CD8-positive, alpha-beta memory T cell (primary cell): ENCODE measurements at regions of chr12 and their contacts with region 1.

Region 1: DNA sequence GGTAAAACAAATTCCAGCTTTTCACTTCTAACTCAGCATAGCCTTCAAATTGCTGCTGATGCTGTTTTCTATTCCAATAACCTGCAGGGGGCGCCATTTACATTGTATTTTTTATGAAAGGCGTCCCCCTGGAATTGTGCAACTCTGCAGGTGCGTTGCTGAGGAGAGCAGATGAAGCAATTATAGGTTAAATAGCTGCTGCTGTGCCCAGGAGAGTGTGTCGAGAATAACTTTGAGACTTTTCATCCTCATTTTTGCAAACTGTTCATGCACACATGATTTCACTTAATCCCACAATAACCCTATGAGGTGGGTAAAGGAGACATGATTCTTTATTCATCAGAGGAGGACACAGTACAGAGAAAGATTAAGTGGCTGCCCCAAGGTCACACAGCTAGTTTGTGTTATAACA is 75.7 kb downstream of the MYRFL start:
- DNase-seq: peak; percentile 31 to 64 (median 54)
- H3K4me3 ChIP-seq: no peak overlapping the region
- H3K4me3 Mint-ChIP-seq: no peak overlapping the region
- H3K27ac ChIP-seq: no peak overlapping the region
- H3K27ac Mint-ChIP-seq: no peak overlapping the region
- H3K4me1 ChIP-seq: no peaks in the 10 kb centered on the region
- H3K4me1 Mint-ChIP-seq: no peaks in the 10 kb centered on the region
- H3K27me3 ChIP-seq: no peaks in the 10 kb centered on the region
- H3K27me3 Mint-ChIP-seq: peaks cover 4 to 11% of the 10 kb centered on the region in 2 donors

Region 2: DNA sequence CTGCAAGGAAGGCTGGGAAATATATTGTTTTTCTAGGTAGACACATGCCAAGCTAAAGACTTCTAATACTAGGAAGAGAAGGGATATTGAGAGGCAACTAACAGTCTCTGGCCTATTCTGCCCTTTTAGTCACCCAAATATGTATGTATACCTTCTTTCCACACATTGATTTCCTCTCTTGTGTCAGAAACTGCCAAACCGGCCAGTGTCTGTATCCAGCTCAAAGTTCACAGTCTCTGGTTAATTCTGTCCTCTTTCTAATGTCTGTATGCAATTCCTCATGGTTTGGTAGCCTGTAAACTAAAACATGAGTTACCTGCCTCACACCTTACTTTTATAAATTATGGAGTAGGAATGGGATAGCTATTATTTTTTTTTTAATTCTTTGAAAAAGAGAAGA is 686.6 kb before region 1 on chr12:
- CTCF ChIA-PET with region 1: no interaction called
- POLR2A ChIA-PET with region 1: no interaction called
- DNase-seq: no peak
- H3K4me3 ChIP-seq: no peak overlapping the region
- H3K4me3 Mint-ChIP-seq: no peak overlapping the region
- H3K27ac ChIP-seq: no peak overlapping the region
- H3K27ac Mint-ChIP-seq: no peak overlapping the region
- H3K4me1 ChIP-seq: no peaks in the 10 kb centered on the region
- H3K4me1 Mint-ChIP-seq: no peaks in the 10 kb centered on the region
- H3K27me3 ChIP-seq: no peaks in the 10 kb centered on the region
- H3K27me3 Mint-ChIP-seq: no peaks in the 10 kb centered on the region

Region 3: DNA sequence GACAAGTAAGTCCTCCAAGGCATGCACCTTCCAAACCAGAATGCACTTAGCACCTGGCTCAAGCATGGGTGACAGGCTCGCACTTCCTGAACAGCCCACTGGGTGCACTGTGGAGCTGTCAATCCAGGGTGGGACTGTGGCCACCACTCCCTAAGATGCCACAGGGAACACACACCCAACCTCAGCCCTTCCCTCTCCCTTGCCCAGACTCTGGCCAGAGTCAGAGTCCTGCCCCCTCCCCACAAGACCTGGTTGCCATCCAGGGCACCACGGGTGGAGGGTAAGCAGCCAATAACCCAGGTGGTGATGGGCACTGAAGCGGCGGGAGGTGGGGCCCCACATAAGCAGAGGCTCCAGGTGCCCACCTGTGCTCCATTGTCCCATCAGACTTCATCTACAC is 84.9 kb after region 1 on chr12:
- CTCF ChIA-PET with region 1: no interaction called
- POLR2A ChIA-PET with region 1: no interaction called
- DNase-seq: no peak
- H3K4me3 ChIP-seq: no peak overlapping the region
- H3K4me3 Mint-ChIP-seq: no peak overlapping the region
- H3K27ac ChIP-seq: no peak overlapping the region
- H3K27ac Mint-ChIP-seq: no peak overlapping the region
- H3K4me1 ChIP-seq: no peaks in the 10 kb centered on the region
- H3K4me1 Mint-ChIP-seq: no peaks in the 10 kb centered on the region
- H3K27me3 ChIP-seq: no peaks in the 10 kb centered on the region
- H3K27me3 Mint-ChIP-seq: peaks cover 0 to 5% of the 10 kb centered on the region in 2 donors

Region 4: DNA sequence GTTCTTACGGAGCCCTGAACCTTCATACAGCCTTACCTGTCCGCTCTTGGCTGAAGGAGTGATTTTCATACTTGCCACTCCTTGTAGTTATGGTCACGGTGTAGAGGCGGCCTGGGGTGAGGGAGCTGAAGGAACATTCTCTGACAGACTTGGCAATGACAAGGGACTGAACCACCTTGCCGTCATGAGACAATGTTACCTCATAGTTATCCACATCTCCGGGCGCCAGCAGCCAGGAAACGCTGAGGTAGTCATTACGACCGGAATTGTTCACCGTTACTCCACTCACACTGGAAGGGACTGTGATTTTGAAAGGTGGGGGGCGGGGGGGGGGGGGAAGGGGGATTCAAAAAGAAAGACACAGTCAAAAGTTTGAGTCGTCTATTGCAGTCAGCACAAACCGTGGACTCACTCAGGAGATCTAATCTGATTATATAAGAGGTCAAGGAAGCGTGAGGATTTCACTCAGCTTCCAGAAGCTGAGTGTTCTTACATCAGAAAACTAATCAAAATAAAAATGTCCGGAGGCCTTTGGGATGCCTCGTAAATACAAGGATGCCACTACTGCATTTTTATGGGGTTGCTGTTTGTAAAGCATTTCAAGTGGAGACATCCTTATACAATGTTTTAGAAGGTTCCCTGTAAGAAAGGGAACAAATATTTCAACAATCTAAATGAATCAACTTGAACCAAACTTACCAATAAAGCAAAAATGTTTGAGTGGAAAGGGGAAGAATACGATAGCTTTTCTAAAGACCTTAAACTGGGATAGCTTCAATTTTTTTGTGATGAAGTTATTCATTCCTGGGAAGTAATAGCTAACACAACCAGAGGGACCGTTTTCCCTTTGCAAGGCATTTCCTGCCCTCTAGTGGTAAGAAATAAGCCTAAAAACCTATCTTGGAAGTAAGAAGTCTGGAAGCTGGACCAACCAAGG is 675.9 kb after region 1 on chr12:
- CTCF ChIA-PET with region 1: interaction called, 12 read pairs
- POLR2A ChIA-PET with region 1: no interaction called
- DNase-seq: peak in 2 of 5 donors; percentile 22 to 35
- H3K4me3 ChIP-seq: no peak overlapping the region
- H3K4me3 Mint-ChIP-seq: no peak overlapping the region
- H3K27ac ChIP-seq: no peak overlapping the region
- H3K27ac Mint-ChIP-seq: no peak overlapping the region
- H3K4me1 ChIP-seq: no peaks in the 10 kb centered on the region
- H3K4me1 Mint-ChIP-seq: no peaks in the 10 kb centered on the region
- H3K27me3 ChIP-seq: no peaks in the 10 kb centered on the region
- H3K27me3 Mint-ChIP-seq: peaks cover 5 to 9% of the 10 kb centered on the region in 2 donors